Right ventricle myocardium inferior (tissue), 1 donor: ENCODE measurements at regions of chr17 and their contacts with region 1.

Region 1: GRCh38 chr17:69058165-69058564 is 2.6 kb downstream of the ABCA9 start:
- DNase-seq: no peak
- ATAC-seq: no peak

Region 2: GRCh38 chr17:68771867-68772515 is 286.2 kb before region 1 on chr17:
- intact Hi-C with region 1: loop called (anchors 10 kb)
- DNase-seq: no peak
- ATAC-seq: peak; percentile 70

Region 3: DNA sequence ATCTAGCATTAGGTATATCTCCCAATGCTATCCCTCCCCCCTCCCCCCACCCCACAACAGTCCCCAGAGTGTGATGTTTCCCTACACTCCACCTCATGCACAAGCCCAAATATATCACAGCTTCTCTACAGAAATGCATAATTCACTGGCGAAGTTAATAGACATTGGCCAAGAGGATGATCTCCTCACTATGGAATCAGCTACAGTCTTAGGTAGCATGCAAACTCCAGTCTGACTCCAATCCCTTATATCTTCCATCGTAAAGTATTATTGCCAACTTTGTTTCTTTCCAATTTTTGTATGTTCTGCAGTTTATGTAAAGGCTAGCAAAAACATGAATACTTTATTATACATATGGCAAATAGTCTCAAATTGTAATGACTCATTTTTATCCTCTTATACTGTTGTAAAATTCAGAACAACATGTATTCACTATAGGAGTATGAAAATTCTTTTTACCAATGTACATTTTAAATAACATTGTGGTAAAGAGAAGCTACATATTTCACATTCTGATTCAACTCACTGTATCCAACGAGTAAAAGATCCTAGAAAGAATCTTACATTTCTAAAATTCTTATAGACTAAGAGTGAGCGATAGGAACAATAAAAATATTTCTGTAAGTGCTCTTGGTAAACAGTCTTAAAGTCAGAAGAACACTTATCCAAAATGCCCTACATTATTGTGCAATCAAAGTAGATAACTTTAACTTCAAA is 103.9 kb before region 1 on chr17:
- intact Hi-C with region 1: no loop called
- DNase-seq: no peak
- ATAC-seq: peak; percentile 14

Region 4: GRCh38 chr17:69084911-69085310 is 26.7 kb after region 1 on chr17:
- intact Hi-C with region 1: no loop called
- DNase-seq: no peak
- ATAC-seq: no peak